A549 (cell line): ENCODE measurements at regions of chr9 and their contacts with region 1.

Region 1: GRCh38 chr9:33737811-33738606 is 57.4 kb upstream of the PRSS3 start:
- DNase-seq: peak; percentile 47 to 81
- ATAC-seq: peak; percentile 95 to 99
- H3K4me3 ChIP-seq: no peak overlapping the region
- H3K27ac ChIP-seq: peak overlapping the region in 1 of 2 experiments; percentile 38; a peak in 2 of 6 replicates
- H3K4me1 ChIP-seq: 0 out of 3 replicates have a peak, but pooled peaks cover 5% of the 10 kb centered on the region
- CTCF ChIP-seq: peak; percentile 88
- EP300 ChIP-seq: no peak
- POLR2A ChIP-seq: no peak
- RAD21 ChIP-seq: peak; percentile 85 to 89

Region 2: DNA sequence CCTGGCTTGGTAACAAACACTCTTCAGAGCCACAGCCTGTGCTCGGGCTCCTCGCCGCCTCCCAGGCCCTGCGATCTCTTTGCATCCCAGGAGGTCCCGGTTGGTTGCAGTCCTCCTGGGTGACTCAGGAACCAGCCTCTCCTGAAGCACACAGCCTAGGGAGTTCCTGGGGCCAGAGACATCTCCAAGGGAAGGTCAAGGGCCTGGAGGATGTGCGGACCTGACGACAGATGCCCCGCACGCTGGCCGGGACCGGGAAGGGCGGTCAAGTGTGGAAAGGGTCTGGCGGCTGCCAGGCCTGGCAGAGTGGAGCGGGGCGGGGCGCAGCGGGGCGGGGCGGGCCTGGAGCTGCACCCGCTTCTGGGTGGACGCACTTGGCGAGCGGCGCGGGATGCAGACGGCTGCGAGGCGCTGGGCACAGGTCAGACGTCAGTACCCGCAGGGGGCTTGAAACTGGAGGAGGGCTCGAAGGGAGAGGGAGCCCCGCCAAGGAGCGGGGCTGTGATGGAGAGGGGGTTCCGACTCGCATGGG is 12.4 kb after region 1 on chr9:
- CTCF ChIA-PET with region 1: interaction called, 25 read pairs
- POLR2A ChIA-PET with region 1: no interaction called
- DNase-seq: peak; percentile 30 to 53
- ATAC-seq: peak; percentile 89 to 91
- H3K4me3 ChIP-seq: peak overlapping the region; percentile 50
- H3K27ac ChIP-seq: peak overlapping the region; percentile 61 to 79
- H3K4me1 ChIP-seq: peaks cover 35% of the 10 kb centered on the region
- CTCF ChIP-seq: no peak
- EP300 ChIP-seq: no peak
- POLR2A ChIP-seq: no peak
- RAD21 ChIP-seq: no peak